CD8-positive, alpha-beta T cell (primary cell): ENCODE measurements at regions of chr12 and their contacts with region 1.

Region 1: DNA sequence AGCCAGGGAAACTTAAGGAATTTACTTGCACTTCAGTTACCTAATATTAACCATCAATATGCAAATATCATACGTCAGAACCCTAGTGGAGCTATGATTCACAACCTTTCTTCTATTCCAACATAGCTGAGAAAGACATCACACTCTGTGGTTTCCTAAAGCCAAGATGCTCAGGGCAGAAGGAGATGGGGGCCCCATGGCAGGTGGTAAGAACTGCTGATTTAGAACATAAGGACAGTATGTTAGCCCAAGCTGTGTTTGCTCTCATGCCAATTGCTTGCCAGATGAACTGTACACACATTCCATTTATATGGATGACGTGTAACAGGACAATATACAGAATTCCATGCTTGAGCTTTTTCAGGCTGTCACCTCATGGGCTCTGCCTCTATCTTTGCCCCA is 34.6 kb downstream of the HECTD4 start:
- DNase-seq: no peak
- ATAC-seq: no peak
- H3K4me3 ChIP-seq: no peak overlapping the region
- H3K4me3 Mint-ChIP-seq: no peak overlapping the region
- H3K27ac ChIP-seq: no peak overlapping the region
- H3K27ac Mint-ChIP-seq: no peak overlapping the region
- H3K4me1 ChIP-seq: no peaks in the 10 kb centered on the region
- H3K4me1 Mint-ChIP-seq: peaks cover 53% of the 10 kb centered on the region
- H3K27me3 ChIP-seq: no peaks in the 10 kb centered on the region
- H3K27me3 Mint-ChIP-seq: no peaks in the 10 kb centered on the region
- CTCF ChIP-seq: no peak

Region 2: DNA sequence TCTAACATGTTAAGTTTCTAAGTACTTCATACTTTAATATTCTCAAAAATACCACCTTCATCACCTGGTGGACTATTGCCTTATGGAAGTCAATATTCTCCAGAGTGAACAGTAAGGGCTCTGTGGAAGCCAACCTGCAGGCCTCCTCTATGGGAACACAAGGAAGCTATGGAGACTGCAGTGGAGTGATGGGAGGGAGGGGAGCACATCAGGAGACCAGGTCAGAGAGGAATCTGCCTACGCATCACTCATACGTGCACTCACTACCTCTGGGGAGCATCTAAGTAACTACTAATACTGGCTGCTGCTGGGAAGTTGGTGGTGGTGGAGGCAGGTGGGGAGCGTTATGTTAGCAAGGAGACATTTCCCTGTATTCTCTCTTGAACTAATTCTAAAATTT is 14.7 kb after region 1 on chr12:
- CTCF ChIA-PET with region 1: no interaction called
- POLR2A ChIA-PET with region 1: interaction called, 3 read pairs
- intact Hi-C with region 1: loop called in 1 of 2 experiments (anchors 1 kb)
- DNase-seq: no peak
- ATAC-seq: no peak
- H3K4me3 ChIP-seq: no peak overlapping the region
- H3K4me3 Mint-ChIP-seq: no peak overlapping the region
- H3K27ac ChIP-seq: no peak overlapping the region
- H3K27ac Mint-ChIP-seq: no peak overlapping the region
- H3K4me1 ChIP-seq: no peaks in the 10 kb centered on the region
- H3K4me1 Mint-ChIP-seq: peaks cover 17% of the 10 kb centered on the region
- H3K27me3 ChIP-seq: no peaks in the 10 kb centered on the region
- H3K27me3 Mint-ChIP-seq: no peaks in the 10 kb centered on the region
- CTCF ChIP-seq: no peak

Region 3: GRCh38 chr12:112380663-112381405 is 33.3 kb after region 1 on chr12:
- CTCF ChIA-PET with region 1: no interaction called
- POLR2A ChIA-PET with region 1: no interaction called
- intact Hi-C with region 1: no loop called
- DNase-seq: peak in 2 of 9 experiments; percentile 9 to 14
- ATAC-seq: no peak
- H3K4me3 ChIP-seq: peak overlapping the region; percentile 53 to 83
- H3K4me3 Mint-ChIP-seq: peak overlapping the region; percentile 95
- H3K27ac ChIP-seq: no peak overlapping the region
- H3K27ac Mint-ChIP-seq: peak overlapping the region; percentile 88
- H3K4me1 ChIP-seq: peaks cover 13% of the 10 kb centered on the region
- H3K4me1 Mint-ChIP-seq: peaks cover 27% of the 10 kb centered on the region
- H3K27me3 ChIP-seq: no peaks in the 10 kb centered on the region
- H3K27me3 Mint-ChIP-seq: no peaks in the 10 kb centered on the region
- CTCF ChIP-seq: no peak